WTC11 (cell line): ENCODE measurements at regions of chr3 and their contacts with region 1.

Region 1: GRCh38 chr3:25962249-25962648 is 172.4 kb downstream of the OXSM start:
- DNase-seq: peak; percentile 27
- ATAC-seq: peak; percentile 98
- H3K4me3 Mint-ChIP-seq: no peak overlapping the region
- H3K27ac Mint-ChIP-seq: no peak overlapping the region
- H3K4me1 Mint-ChIP-seq: no peaks in the 10 kb centered on the region
- H3K27me3 Mint-ChIP-seq: no peaks in the 10 kb centered on the region
- CTCF ChIP-seq: peak; percentile 39; the same call in 1 of the 2 replicates

Region 2: GRCh38 chr3:25904206-25904605 is 58.0 kb before region 1 on chr3:
- CTCF ChIA-PET with region 1: interaction called, 19 read pairs
- POLR2A ChIA-PET with region 1: no interaction called
- DNase-seq: no peak
- ATAC-seq: peak; percentile 72
- H3K4me3 Mint-ChIP-seq: no peak overlapping the region
- H3K27ac Mint-ChIP-seq: no peak overlapping the region
- H3K4me1 Mint-ChIP-seq: peaks cover 31% of the 10 kb centered on the region
- H3K27me3 Mint-ChIP-seq: peaks cover 9% of the 10 kb centered on the region
- CTCF ChIP-seq: no peak

Region 3: DNA sequence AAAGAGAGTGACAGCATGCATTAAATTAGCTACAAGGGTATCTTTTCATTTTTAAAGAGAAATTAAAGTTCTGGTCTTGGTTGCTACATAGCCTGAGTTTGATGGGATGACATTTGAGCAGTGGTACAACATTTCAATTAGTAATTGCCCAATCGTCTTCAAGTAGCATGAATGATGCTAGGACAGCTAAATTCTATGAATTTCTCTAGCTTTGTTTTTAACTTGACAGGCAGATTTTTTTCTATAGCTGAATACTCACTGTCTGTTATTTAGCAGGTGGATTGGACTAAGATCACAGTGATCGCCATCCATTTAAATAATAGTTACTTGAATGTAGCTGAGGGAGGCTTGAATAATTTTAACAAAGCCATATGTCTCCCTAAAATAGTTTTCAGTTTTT is 10.1 kb before region 1 on chr3:
- CTCF ChIA-PET with region 1: no interaction called
- POLR2A ChIA-PET with region 1: no interaction called
- DNase-seq: no peak
- ATAC-seq: no peak
- H3K4me3 Mint-ChIP-seq: no peak overlapping the region
- H3K27ac Mint-ChIP-seq: no peak overlapping the region
- H3K4me1 Mint-ChIP-seq: no peaks in the 10 kb centered on the region
- H3K27me3 Mint-ChIP-seq: no peaks in the 10 kb centered on the region
- CTCF ChIP-seq: no peak

Region 4: GRCh38 chr3:26118165-26118564 is 155.9 kb after region 1 on chr3:
- CTCF ChIA-PET with region 1: interaction called, 20 read pairs
- POLR2A ChIA-PET with region 1: no interaction called
- DNase-seq: peak; percentile 53
- ATAC-seq: peak; percentile 99
- H3K4me3 Mint-ChIP-seq: no peak overlapping the region
- H3K27ac Mint-ChIP-seq: no peak overlapping the region
- H3K4me1 Mint-ChIP-seq: peaks cover 6% of the 10 kb centered on the region; the same call in 1 of the 2 replicates
- H3K27me3 Mint-ChIP-seq: no peaks in the 10 kb centered on the region
- CTCF ChIP-seq: 0 out of 2 replicates have a peak, but pooled peaks have one; percentile 17